ENCODE measurements at regions of chr18 and their contacts with region 1.

Region 1: GRCh38 chr18:11387880-11388279 is 221.5 kb upstream of the SLC35G4 start:
- DNase-seq: no peak
- ATAC-seq: peak; percentile 59

Region 2: DNA sequence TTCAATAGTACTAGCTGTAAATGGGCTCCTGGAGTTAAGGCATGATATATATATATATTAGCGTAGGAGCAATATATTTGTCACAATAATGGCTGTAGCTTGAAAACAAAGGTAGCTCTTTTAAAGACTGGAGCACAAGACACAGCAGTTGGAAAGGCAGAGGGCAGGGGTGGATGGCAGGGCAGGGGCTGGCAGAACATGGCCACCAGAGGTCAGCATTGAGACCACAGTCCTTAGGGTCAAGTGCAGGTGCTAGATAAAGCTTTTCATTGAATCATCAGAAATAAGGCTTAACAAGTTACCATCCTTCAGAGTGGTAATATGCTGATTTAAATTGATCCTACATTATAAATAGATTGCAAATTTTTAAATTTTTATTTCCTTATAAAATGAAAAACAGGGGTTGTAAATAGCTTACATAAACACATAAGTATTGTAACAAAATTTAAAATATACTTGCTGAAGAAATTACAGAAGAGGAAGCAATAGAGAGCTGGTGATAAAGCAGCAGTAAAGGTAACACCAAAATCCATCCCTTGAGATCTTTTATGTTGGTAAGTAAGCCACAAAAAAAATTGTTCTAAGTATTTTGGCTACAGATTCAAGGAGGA is 77.3 kb before region 1 on chr18:
- intact Hi-C with region 1: loop called (anchors 2 kb)
- DNase-seq: no peak
- ATAC-seq: no peak